ENCODE measurements at regions of chr12 and their contacts with region 1.

Region 1: GRCh38 chr12:104215638-104216297 is at the start of gene TXNRD1:
- DNase-seq: peak; percentile 92
- H3K4me3 ChIP-seq: peak within 1 kb of the TSS; percentile 55 to 65 (median 64)
- H3K27ac ChIP-seq: peak within 1 kb of the TSS; percentile 84 to 89 (median 86)
- H3K4me1 ChIP-seq: peaks cover 0 to 34% (median 29%) of the 10 kb centered on the region in 4 donors
- H3K27me3 ChIP-seq: no peaks in the 10 kb centered on the region
- CTCF ChIP-seq: peak; percentile 73 to 95 (median 88)
- EP300 ChIP-seq: peak in 1 of 4 donors; percentile 18
- POLR2A ChIP-seq: peak in 1 of 2 donors; percentile 62
- total RNA-seq, gene TXNRD1: 121 to 188 (median 143) TPM

Region 2: GRCh38 chr12:103877934-103878510 is 337.7 kb before region 1 on chr12:
- intact Hi-C with region 1: no loop called
- DNase-seq: peak; percentile 78
- H3K4me3 ChIP-seq: no peak overlapping the region
- H3K27ac ChIP-seq: no peak overlapping the region
- H3K4me1 ChIP-seq: peaks cover 0 to 5% (median 0%) of the 10 kb centered on the region in 4 donors
- H3K27me3 ChIP-seq: no peaks in the 10 kb centered on the region
- CTCF ChIP-seq: peak; percentile 51 to 64 (median 60)
- EP300 ChIP-seq: no peak
- POLR2A ChIP-seq: no peak

Region 3: DNA sequence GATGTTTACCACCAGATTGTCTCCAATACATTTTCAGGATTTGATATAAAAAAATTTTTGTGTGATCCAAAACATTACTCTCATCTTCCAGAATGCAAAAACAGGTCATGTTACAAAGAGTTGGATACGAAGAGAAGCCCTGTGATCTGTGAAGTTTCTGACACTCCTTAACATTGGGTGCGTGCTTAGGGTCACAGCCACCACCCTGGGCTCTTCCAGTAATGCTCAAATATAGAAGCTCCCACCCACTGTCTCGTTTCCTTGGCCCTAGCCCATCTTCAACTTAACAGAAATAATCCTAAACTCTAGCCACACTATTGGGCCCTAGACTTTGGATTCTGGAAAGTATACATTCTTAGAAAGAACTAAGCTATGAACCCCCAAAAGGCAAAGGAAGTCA is 318.5 kb before region 1 on chr12:
- intact Hi-C with region 1: no loop called
- DNase-seq: no peak
- H3K4me3 ChIP-seq: no peak overlapping the region
- H3K27ac ChIP-seq: no peak overlapping the region
- H3K4me1 ChIP-seq: no peaks in the 10 kb centered on the region
- H3K27me3 ChIP-seq: no peaks in the 10 kb centered on the region
- CTCF ChIP-seq: no peak
- EP300 ChIP-seq: no peak
- POLR2A ChIP-seq: no peak

Region 4: DNA sequence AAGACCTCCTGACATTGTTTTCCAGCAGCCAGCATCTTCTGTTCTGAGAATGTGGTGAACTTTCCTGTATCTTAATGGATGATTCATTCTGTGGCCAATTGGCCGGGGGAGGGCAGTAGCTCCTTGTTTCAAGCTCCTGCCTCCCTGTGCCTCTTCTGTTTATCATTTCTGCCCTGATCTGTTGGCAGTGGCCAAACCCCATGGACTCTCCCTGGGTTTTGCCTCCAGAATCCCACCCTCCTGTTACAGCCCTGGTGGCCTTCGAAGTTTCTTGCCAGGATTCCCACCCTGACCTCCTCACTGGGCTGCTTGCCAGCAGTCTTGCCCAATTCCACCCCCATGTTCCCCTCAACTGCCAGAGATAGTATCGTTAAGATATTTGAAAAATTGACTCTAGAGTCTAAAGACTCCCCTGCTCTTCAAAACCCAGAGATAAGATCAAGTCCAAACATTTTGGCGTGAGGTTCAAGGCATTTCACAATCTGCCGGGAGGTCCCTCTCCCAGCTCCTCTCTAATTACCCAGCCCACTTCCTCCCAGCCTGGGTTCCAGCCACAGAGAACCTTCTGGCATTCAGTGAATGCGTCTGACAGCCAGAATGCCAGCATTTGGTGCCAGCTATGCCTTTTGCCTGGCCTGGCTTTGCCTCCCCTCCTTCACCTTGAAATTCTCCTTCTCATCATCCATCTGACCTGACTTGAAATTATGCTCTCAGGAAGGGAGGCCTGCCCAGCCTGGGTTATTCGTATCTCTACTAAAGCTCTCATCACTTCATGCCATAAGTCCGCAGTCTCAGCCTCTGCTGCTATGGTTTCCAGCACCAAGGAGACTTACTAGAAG is 37.9 kb before region 1 on chr12:
- intact Hi-C with region 1: loop called (anchors 5 kb)
- DNase-seq: peak; percentile 97
- H3K4me3 ChIP-seq: no peak overlapping the region
- H3K27ac ChIP-seq: peak overlapping the region; percentile 83 to 91 (median 89)
- H3K4me1 ChIP-seq: peaks cover 0 to 70% (median 67%) of the 10 kb centered on the region in 4 donors
- H3K27me3 ChIP-seq: no peaks in the 10 kb centered on the region
- CTCF ChIP-seq: peak in 1 of 4 experiments; percentile 23
- EP300 ChIP-seq: peak in 2 of 4 donors; percentile 97 to 99
- POLR2A ChIP-seq: no peak

Region 5: GRCh38 chr12:104258476-104259067 is 42.8 kb after region 1 on chr12:
- intact Hi-C with region 1: no loop called
- DNase-seq: no peak
- H3K4me3 ChIP-seq: no peak overlapping the region
- H3K27ac ChIP-seq: no peak overlapping the region
- H3K4me1 ChIP-seq: no peaks in the 10 kb centered on the region
- H3K27me3 ChIP-seq: no peaks in the 10 kb centered on the region
- CTCF ChIP-seq: no peak
- EP300 ChIP-seq: no peak
- POLR2A ChIP-seq: no peak

Region 6: GRCh38 chr12:104286538-104287482 is 71.0 kb after region 1 on chr12:
- intact Hi-C with region 1: loop called (anchors 2 kb)
- DNase-seq: peak; percentile 97
- H3K4me3 ChIP-seq: peak overlapping the region; percentile 56 to 78 (median 66)
- H3K27ac ChIP-seq: peak overlapping the region; percentile 89 to 98 (median 90)
- H3K4me1 ChIP-seq: peaks cover 0 to 37% (median 32%) of the 10 kb centered on the region in 4 donors
- H3K27me3 ChIP-seq: no peaks in the 10 kb centered on the region
- CTCF ChIP-seq: peak in 1 of 4 experiments; percentile 17
- EP300 ChIP-seq: peak in 1 of 4 donors; percentile 61
- POLR2A ChIP-seq: peak; percentile 78 to 82

Region 7: DNA sequence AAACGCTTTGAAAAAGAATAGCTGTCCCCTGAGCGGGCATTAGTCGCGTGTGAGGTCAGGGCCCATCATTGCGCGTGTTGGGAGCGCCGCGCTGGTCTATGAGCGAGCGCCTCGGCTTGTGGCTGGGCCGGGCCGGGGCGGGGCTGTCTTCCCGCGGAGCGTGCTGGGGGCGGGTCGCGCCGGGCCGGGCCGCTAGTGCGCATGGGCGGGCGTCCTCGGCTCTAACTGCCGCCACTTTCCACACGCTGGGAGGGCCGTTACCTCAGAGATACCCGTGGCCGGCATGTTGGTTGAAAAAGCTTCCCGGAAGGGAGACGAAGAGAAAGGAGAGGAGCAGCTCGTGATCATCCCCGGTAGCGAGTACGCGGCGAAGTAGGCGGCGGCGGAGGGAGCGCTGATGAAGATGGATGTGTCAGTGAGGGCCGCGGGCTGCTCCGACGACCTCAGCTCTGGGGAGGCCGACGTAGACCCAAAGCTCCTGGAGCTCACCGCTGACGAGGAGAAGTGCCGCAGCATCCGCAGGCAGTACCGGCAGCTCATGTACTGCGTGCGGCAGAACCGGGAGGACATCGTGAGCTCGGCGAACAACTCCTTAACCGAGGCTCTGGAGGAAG is 87.9 kb after region 1 on chr12 and contains the start of gene EID3:
- intact Hi-C with region 1: loop called (anchors 5 kb)
- DNase-seq: peak; percentile 95
- H3K4me3 ChIP-seq: peak within 1 kb of the TSS; percentile 34 to 55 (median 48)
- H3K27ac ChIP-seq: peak within 1 kb of the TSS; percentile 81 to 88 (median 82)
- H3K4me1 ChIP-seq: peaks cover 0 to 78% (median 66%) of the 10 kb centered on the region in 4 donors
- H3K27me3 ChIP-seq: no peaks in the 10 kb centered on the region
- CTCF ChIP-seq: no peak
- EP300 ChIP-seq: no peak
- POLR2A ChIP-seq: no peak
- total RNA-seq, gene EID3: 4.6 to 21.9 (median 13.5) TPM

Region 8: DNA sequence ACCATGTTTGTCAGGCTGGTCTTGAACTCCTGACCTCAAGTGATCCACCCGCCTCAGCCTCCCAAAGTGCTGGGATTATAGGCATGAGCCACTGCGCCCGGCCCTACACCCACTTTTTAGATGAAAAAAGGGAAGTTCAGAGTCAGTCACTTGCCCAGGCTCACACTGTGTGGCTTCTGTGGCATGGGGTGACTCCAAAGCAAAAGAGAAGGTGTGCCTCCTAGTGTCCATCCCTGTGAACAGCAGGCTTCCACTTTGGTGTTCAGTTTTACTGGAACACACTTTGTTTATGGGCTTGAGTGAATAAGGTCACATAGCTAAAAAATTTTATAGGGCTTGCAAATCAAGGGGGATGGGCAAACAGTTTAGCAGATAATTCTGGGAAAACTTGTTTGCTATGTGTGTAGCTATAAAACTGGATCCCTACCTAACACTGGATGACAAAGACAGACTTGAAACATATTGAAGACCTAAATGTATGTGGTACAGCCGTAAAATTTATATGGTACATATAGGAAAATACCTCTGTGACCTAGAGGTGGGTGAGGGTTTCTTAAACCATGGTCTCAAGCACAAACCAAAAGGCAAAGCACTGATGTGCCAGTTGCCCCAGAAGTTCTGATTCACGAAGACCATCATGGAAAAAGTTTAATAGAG is 142.7 kb after region 1 on chr12:
- intact Hi-C with region 1: loop called (anchors 1 kb)
- DNase-seq: peak; percentile 78
- H3K4me3 ChIP-seq: no peak overlapping the region
- H3K27ac ChIP-seq: no peak overlapping the region
- H3K4me1 ChIP-seq: peaks cover 0 to 10% (median 2%) of the 10 kb centered on the region in 4 donors
- H3K27me3 ChIP-seq: no peaks in the 10 kb centered on the region
- CTCF ChIP-seq: peak; percentile 70 to 87 (median 80)
- EP300 ChIP-seq: no peak
- POLR2A ChIP-seq: no peak

Region 9: DNA sequence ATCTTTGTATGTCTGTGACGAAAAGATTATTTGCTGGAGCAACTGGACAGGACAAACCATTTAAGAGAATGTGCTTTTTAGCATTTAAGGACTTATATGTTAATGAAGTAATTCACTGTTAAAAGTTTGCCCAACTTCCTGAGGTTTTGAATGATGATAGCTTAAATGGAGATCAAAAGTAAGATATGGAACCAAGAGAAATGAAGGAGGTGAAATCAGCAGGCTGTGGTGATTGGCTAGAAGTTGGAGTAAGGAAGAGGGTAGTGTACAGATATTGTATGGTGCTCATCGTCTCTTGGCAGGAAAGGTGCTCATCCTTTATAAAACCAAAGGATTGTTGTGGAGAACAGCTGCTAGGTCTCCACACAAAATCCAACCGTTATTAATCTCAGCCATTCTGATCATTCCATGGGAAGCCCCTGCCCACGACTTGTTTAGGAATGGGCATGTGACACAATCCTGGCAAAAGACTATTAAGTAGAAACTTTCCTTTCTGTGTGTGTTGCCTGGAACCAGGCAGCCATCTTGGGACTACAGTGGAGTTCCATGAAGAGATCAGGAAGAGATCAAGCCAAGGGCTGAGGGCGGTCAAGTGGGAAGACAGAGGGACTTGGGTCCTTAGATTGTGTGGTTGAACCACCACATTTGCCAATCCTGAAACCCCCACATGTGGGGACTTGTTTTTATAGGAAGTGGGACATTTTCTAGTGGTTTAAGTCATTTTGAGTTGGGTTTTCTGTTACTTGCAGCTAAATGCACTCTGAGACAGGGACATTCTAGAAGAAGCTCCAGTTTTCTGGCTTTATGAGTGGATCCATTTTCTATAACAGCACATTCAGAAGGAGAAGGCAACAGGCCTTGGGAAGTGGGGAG is 184.2 kb after region 1 on chr12:
- intact Hi-C with region 1: no loop called
- DNase-seq: no peak
- H3K4me3 ChIP-seq: no peak overlapping the region
- H3K27ac ChIP-seq: no peak overlapping the region
- H3K4me1 ChIP-seq: no peaks in the 10 kb centered on the region
- H3K27me3 ChIP-seq: no peaks in the 10 kb centered on the region
- CTCF ChIP-seq: no peak
- EP300 ChIP-seq: no peak
- POLR2A ChIP-seq: no peak